Psoas muscle (tissue), 8 donors: ENCODE measurements at regions of chr2 and their contacts with region 1.

Region 1: DNA sequence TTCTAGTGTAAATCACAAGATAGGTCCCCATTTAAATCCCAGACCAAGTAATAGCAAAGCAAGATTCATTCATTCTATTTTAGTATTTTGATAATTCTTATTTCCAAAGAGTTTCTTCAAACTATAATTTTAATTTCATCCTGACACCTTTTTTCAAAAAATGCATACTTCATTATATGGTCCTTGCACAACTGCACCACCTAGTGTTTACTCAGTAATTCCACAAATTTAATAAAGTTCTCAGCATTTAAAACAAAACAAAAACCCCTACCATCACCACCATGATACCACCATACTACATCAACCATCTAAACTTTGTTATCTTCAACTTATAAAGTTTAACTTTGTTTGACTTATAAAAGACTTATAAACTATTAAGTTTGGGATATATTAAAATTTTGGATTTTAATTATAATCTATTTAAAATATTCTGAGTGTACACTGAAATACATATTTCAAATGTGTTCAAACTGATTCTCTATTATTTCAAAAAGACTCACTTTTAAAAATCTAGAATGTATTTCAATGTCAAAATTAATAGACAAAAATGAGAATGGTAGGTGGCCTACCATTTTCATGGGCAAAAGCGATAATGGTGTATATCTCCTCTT is 44.2 kb downstream of the WDPCP start:
- DNase-seq: no peak
- ATAC-seq: no peak
- H3K4me3 ChIP-seq: no peak overlapping the region
- H3K27ac ChIP-seq: no peak overlapping the region
- H3K4me1 ChIP-seq: no peaks in the 10 kb centered on the region
- H3K27me3 ChIP-seq: no peaks in the 10 kb centered on the region
- CTCF ChIP-seq: peak; percentile 38

Region 2: DNA sequence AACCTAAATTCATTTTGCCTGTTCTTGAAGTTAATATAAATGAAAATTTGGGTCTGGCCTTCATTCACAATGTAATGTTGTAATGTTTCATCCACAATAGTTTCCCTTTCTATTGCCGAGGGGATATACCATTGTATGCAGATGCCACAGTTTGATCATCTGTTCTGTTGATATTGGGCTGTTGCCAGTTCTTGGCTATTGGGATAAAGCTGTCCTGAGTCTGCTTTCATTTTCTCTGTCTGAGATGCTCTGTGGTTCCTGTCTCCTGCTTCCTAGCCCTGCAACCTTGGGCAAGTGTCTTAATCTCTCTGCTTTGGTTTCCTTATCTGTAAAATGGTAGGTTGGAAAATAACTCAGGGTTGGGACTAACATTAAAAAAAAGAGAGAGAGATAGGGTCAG is 1323.0 kb before region 1 on chr2:
- intact Hi-C with region 1: loop called in 1 of 2 experiments (anchors 5 kb)
- DNase-seq: no peak
- ATAC-seq: no peak
- H3K4me3 ChIP-seq: no peak overlapping the region
- H3K27ac ChIP-seq: no peak overlapping the region
- H3K4me1 ChIP-seq: peaks cover 8% of the 10 kb centered on the region
- H3K27me3 ChIP-seq: no peaks in the 10 kb centered on the region
- CTCF ChIP-seq: no peak

Region 3: DNA sequence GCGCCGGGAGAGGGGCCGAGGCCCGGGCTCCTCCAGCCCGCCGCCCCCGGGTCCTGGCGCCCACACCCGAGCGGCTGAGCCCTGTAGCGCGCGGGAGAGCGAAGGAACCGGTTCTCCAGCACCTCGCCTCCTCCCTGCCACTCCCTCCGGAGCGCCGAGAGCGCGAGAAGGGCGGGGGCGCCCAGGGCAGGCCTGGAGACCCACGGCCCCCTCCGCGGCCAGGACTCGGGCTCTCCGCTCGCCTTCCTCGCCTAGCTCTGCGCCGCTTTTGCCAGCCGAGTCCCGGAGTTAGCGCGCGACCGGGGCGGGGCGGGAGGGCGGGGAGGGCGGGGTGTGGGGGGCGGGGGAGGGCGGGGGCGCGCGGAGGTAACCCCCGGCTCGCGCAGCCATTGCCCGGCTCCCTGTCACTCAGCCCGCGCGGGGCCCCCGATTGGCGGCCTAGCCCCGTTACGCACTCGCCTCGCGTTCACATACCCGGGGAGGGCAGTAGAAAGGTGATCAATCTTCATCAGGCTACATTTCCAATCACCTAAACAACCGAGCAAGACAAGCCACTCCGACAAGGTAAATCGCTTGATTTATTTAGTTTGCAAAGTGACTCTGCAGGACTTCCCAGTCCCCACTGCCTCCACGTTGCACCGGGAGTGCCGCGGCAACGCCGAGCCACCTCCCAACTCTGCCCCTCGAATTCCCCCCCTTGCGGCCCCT is 493.6 kb before region 1 on chr2 and contains the start of gene OTX1:
- intact Hi-C with region 1: no loop called
- DNase-seq: peak; percentile 56 to 67
- ATAC-seq: peak; percentile 83 to 93 (median 86)
- H3K4me3 ChIP-seq: peak within 1 kb of the TSS; percentile 73
- H3K27ac ChIP-seq: no peak within 1 kb of the TSS
- H3K4me1 ChIP-seq: peaks cover 16% of the 10 kb centered on the region
- H3K27me3 ChIP-seq: peaks cover 8 to 100% (median 61%) of the 10 kb centered on the region in 3 donors
- CTCF ChIP-seq: no peak
- total RNA-seq, gene OTX1: not detected

Region 4: DNA sequence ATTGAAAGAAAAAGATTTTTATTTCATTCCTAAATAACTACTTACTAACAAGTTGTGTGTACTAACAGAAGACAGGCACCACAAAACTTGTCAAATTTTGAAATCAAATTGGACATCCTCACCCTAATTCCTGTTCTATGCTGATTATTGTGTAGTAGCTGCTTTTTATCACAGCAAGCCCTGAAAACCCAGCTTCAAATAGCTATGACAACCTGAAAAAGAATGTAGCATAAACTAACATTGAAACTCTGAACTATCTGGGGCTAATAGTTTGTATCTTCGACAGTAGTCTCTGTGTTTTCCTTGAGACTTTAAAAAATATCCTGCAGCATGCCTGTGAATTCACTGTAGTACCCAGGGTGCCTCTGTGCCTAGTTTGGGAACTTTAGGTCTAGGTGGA is 78.5 kb before region 1 on chr2:
- intact Hi-C with region 1: no loop called
- DNase-seq: no peak
- ATAC-seq: no peak
- H3K4me3 ChIP-seq: no peak overlapping the region
- H3K27ac ChIP-seq: no peak overlapping the region
- H3K4me1 ChIP-seq: no peaks in the 10 kb centered on the region
- H3K27me3 ChIP-seq: no peaks in the 10 kb centered on the region
- CTCF ChIP-seq: no peak